IMR-90 (cell line): ENCODE measurements at regions of chr20 and their contacts with region 1.

Region 1: GRCh38 chr20:62088237-62089127 is 22.8 kb upstream of the TAF4 start:
- DNase-seq: peak; percentile 99
- ATAC-seq: peak; percentile 95
- H3K4me3 ChIP-seq: no peak overlapping the region
- H3K27ac ChIP-seq: no peak overlapping the region
- H3K4me1 ChIP-seq: peaks cover 7% of the 10 kb centered on the region
- H3K27me3 ChIP-seq: peaks cover 9% of the 10 kb centered on the region; the same call in 1 of the 2 replicates
- CTCF ChIP-seq: no peak
- POLR2A ChIP-seq: no peak
- RAD21 ChIP-seq: no peak

Region 2: DNA sequence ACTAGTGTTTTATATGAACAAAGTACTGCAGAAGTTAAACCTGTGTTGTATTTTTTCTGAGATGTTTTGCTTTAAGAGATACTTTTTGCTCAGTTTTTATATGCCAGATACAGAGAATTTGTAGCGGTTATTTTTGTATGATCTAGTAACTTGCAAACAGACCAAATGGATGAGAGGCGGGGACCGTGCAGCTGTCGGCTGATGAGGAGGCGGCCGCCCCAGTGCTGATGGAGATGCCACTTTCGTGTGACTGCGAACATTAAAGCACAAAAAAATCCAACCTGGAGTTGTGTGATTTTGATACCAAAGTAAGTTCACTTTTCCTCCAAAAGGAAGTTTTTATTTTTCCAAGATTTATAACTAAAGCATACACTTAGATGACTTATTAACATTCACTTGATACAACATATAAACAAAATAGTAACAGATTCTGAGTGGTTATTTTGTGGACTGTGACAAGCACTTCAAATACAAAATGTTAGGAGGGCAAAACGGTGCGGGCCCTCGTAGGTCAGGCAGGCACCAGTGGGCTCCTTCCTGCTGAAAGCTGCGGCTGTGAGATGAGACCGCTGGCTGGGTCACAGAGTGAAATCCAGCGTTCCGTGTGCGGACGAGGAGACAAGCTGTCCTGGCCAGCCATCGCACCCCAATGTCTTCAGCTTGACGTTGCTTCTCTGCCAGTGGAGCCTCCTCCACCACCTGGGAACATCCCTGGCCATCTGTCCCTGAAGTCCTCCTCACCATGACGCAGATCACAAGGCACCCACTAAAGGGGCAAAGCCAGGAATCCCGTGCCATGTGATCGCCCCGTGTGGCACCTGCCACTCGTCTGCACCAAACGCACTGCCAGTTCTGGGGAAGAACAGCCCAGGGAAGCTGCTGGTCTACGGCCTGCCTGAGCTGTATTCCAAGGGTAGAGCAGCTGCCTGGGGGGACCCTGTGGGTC is 712.1 kb after region 1 on chr20:
- CTCF ChIA-PET with region 1: no interaction called
- POLR2A ChIA-PET with region 1: interaction called, 11 read pairs
- dilution Hi-C with region 1: no loop called
- in situ Hi-C with region 1: no loop called
- intact Hi-C with region 1: no loop called
- DNase-seq: no peak
- ATAC-seq: no peak
- H3K4me3 ChIP-seq: no peak overlapping the region
- H3K27ac ChIP-seq: no peak overlapping the region
- H3K4me1 ChIP-seq: peaks cover 6% of the 10 kb centered on the region
- H3K27me3 ChIP-seq: no peaks in the 10 kb centered on the region
- CTCF ChIP-seq: no peak
- POLR2A ChIP-seq: no peak
- RAD21 ChIP-seq: no peak